ENCODE measurements at regions of chr3 and their contacts with region 1.

Region 1: GRCh38 chr3:20930034-20930433 is 744.0 kb upstream of the SGO1 start:
- DNase-seq: no peak
- ATAC-seq: no peak
- H3K4me3 ChIP-seq: no peak overlapping the region
- H3K27ac ChIP-seq: no peak overlapping the region
- H3K4me1 ChIP-seq: no peaks in the 10 kb centered on the region
- H3K27me3 ChIP-seq: no peaks in the 10 kb centered on the region
- CTCF ChIP-seq: no peak

Region 2: DNA sequence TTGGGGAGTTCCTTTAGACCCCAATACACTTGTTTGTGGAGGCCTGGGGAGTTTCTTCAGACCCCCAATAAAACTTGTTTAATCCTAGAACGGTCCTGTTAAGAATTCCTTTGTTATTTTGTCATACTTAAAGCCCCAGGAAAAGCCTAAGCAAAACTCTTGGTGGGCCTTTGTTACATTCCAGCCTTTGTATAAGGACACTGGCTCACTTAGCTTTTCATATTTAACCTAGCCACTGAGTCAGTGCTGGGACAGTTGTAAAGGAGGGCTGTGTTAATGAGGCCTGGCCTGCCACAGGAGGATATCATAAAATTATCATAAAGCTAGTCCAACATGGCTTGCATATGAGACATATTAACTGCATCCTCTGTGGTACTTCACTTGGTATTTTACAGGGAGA is 60.9 kb after region 1 on chr3:
- CTCF ChIA-PET with region 1: no interaction called
- POLR2A ChIA-PET with region 1: interaction called, 15 read pairs
- in situ Hi-C with region 1: no loop called
- intact Hi-C with region 1: no loop called
- DNase-seq: no peak
- ATAC-seq: no peak
- H3K4me3 ChIP-seq: no peak overlapping the region
- H3K27ac ChIP-seq: no peak overlapping the region
- H3K4me1 ChIP-seq: no peaks in the 10 kb centered on the region
- H3K27me3 ChIP-seq: no peaks in the 10 kb centered on the region
- CTCF ChIP-seq: no peak

Region 3: GRCh38 chr3:21117370-21117769 is 187.3 kb after region 1 on chr3:
- CTCF ChIA-PET with region 1: no interaction called
- POLR2A ChIA-PET with region 1: no interaction called
- in situ Hi-C with region 1: no loop called
- intact Hi-C with region 1: no loop called
- DNase-seq: no peak
- ATAC-seq: no peak
- H3K4me3 ChIP-seq: no peak overlapping the region
- H3K27ac ChIP-seq: no peak overlapping the region
- H3K4me1 ChIP-seq: no peaks in the 10 kb centered on the region
- H3K27me3 ChIP-seq: no peaks in the 10 kb centered on the region
- CTCF ChIP-seq: no peak

Region 4: DNA sequence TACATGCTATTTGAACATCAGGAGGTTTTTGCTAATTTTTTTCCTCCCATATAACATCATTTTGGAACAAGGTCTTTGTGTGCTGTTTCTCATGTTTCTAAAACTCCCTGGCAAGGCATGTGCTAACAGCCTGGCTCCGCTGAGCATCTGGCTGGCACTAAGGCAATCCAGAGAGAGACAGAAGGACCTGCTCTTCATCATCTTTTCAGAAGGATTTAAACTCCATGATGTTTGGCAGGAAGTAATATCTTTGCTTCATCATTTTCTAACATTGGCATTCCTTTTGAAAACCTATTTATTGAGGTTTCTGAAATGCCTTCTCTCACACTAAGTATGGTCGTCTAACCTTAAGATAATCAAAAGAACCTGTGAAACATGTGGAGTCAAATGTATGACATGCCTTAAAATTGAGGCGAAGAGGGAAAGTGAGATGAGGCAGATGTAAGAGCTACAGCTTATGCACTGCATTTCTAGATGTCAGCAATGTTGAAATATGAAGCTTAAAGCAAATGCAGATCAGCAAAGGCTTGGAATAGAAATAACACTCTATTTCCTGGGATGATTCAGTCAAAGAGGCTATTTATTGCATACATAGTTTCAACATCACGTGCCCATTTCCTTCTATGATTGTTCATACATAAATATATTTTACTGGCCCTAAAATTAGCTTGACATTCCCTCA is 229.0 kb after region 1 on chr3:
- CTCF ChIA-PET with region 1: no interaction called
- POLR2A ChIA-PET with region 1: no interaction called
- in situ Hi-C with region 1: no loop called
- intact Hi-C with region 1: no loop called
- DNase-seq: no peak
- ATAC-seq: no peak
- H3K4me3 ChIP-seq: no peak overlapping the region
- H3K27ac ChIP-seq: no peak overlapping the region
- H3K4me1 ChIP-seq: no peaks in the 10 kb centered on the region
- H3K27me3 ChIP-seq: no peaks in the 10 kb centered on the region
- CTCF ChIP-seq: no peak

Measured in Panc1 (cell line).